ENCODE measurements at regions of chr17 and their contacts with region 1.

Region 1: DNA sequence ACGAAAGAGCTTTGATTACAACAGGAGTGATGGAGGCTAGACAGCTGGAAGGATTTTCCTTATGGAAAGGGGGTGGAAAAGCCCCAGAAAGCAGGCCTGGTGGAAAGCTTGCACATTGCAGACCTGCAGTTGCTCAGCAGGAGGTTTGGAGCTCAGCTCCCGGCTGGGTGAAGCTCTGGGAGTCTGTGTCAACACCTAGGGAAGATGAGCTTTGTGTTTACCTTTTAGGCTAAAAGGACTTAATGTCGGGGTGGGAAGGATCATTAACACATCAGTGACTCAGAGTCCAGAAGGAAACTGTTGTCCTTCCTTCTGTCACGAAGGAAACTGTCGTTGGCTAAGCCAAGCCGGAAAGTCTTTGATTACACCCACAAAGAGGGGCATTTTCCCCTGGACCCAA is 48.2 kb downstream of the RAP1GAP2 start:
- DNase-seq: no peak
- H3K4me3 ChIP-seq: no peak overlapping the region
- H3K27ac ChIP-seq: no peak overlapping the region
- H3K4me1 ChIP-seq: peaks cover 6 to 15% (median 6%) of the 10 kb centered on the region in 4 experiments; a peak in 5 of 7 replicates
- H3K27me3 ChIP-seq: no peaks in the 10 kb centered on the region
- CTCF ChIP-seq: no peak
- EP300 ChIP-seq: no peak
- POLR2A ChIP-seq: no peak
- RAD21 ChIP-seq: no peak

Region 2: DNA sequence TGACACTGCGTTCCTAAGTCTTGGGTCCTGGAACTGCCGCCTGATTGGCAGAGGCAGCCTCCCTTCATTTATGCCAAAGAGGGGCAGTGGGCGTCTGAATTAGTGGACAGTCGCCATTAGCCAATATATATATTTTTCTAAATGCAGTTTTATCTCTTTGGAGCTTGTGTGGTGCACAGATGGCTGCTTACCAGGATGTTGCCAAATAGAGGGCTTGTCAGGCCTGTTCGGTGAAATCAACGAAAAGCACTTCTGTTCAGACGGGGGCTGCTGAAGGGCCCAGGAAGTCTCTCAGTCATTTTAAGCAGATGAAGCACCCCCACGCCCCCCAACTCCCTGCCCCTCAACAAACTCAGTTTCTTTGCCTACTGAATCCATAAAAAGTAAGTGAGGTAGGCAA is 17.8 kb after region 1 on chr17:
- CTCF ChIA-PET with region 1: interaction called, 50 read pairs
- POLR2A ChIA-PET with region 1: no interaction called
- DNase-seq: no peak
- H3K4me3 ChIP-seq: no peak overlapping the region
- H3K27ac ChIP-seq: no peak overlapping the region
- H3K4me1 ChIP-seq: peaks cover 0 to 18% (median 6%) of the 10 kb centered on the region in 4 experiments
- H3K27me3 ChIP-seq: no peaks in the 10 kb centered on the region
- CTCF ChIP-seq: no peak
- EP300 ChIP-seq: no peak
- POLR2A ChIP-seq: no peak
- RAD21 ChIP-seq: no peak

Region 3: GRCh38 chr17:2874189-2874686 is 29.8 kb after region 1 on chr17:
- CTCF ChIA-PET with region 1: interaction called, 25 read pairs
- POLR2A ChIA-PET with region 1: interaction called, 8 read pairs
- DNase-seq: peak in 1 of 2 experiments; percentile 87
- H3K4me3 ChIP-seq: peak overlapping the region in 2 of 4 experiments; percentile 7 to 31; a peak in 3 of 8 replicates
- H3K27ac ChIP-seq: peak overlapping the region; percentile 89
- H3K4me1 ChIP-seq: peaks cover 15 to 41% (median 29%) of the 10 kb centered on the region in 4 experiments
- H3K27me3 ChIP-seq: no peaks in the 10 kb centered on the region
- CTCF ChIP-seq: no peak
- EP300 ChIP-seq: no peak
- POLR2A ChIP-seq: peak in 1 of 2 experiments; percentile 72; a peak in 2 of 3 replicates
- RAD21 ChIP-seq: no peak

Region 4: DNA sequence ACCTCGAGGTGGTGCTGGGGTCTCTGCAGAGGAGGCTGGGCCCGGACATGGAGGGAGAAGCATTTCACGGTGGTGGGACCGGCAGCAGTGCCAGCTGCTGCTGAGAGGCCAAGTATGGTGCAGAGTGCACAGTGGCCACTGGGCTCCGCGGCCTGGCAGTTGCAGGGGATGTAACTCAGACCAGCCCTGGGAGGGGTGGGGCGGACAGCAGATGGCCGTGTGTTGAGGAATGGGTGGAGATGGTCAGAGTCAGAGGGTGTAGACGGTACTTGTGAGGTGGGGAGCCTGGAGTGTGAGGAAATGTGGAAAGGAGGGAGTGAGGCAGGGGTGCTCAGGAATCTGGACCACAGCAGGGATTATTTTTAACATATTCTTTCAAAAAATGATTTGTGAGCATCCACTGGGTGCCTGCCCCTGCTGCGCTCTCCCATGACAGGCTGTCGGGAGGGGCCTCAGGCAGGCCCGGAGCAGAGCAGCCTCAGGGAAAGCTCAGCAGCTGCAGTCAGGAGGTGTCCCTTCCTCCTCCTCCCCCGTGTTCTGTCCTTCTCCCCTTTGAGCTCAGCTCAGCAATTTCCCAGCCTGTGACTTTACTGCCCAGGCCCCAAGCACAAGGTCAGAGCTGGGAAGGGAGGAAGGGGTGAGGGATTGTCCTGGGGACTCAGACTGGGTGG is 64.9 kb after region 1 on chr17:
- CTCF ChIA-PET with region 1: interaction called, 18 read pairs
- POLR2A ChIA-PET with region 1: no interaction called
- DNase-seq: no peak
- H3K4me3 ChIP-seq: no peak overlapping the region
- H3K27ac ChIP-seq: no peak overlapping the region
- H3K4me1 ChIP-seq: peaks cover 0 to 6% (median under 1%) of the 10 kb centered on the region in 4 experiments; a peak in 3 of 7 replicates
- H3K27me3 ChIP-seq: no peaks in the 10 kb centered on the region
- CTCF ChIP-seq: no peak
- EP300 ChIP-seq: no peak
- POLR2A ChIP-seq: no peak
- RAD21 ChIP-seq: no peak

Region 5: DNA sequence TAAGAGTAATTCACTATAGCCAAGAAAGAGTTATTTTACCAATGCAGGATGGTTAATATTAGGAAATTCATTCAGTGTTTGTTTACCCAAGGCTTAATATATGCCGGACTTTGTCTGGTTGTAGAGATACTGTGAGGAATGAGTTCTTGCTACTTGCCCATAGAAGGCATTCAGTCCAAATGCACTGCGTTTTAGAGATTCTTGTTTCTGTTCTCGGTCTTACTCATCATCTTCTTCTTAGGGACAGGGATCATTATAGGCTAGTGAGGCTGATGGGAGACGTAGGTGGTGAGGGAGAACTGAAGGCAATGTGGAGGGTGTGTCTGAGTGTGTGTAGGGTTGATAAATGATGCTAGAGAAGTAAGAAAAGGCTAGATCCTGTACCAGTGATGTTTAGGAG is 128.3 kb after region 1 on chr17:
- CTCF ChIA-PET with region 1: interaction called, 11 read pairs
- POLR2A ChIA-PET with region 1: no interaction called
- DNase-seq: no peak
- H3K4me3 ChIP-seq: no peak overlapping the region
- H3K27ac ChIP-seq: no peak overlapping the region
- H3K4me1 ChIP-seq: no peaks in the 10 kb centered on the region
- H3K27me3 ChIP-seq: no peaks in the 10 kb centered on the region
- CTCF ChIP-seq: no peak
- EP300 ChIP-seq: no peak
- POLR2A ChIP-seq: no peak
- RAD21 ChIP-seq: no peak

Region 6: GRCh38 chr17:3012926-3013581 is 168.6 kb after region 1 on chr17:
- CTCF ChIA-PET with region 1: interaction called, 66 read pairs
- POLR2A ChIA-PET with region 1: no interaction called
- DNase-seq: peak; percentile 62 to 82
- H3K4me3 ChIP-seq: no peak overlapping the region
- H3K27ac ChIP-seq: no peak overlapping the region
- H3K4me1 ChIP-seq: no peaks in the 10 kb centered on the region
- H3K27me3 ChIP-seq: no peaks in the 10 kb centered on the region
- CTCF ChIP-seq: peak; percentile 88 to 98 (median 94)
- EP300 ChIP-seq: no peak
- POLR2A ChIP-seq: no peak
- RAD21 ChIP-seq: peak; percentile 97 to 98

Measured in H1 (cell line).